ENCODE measurements at regions of chr3 and their contacts with region 1.

Region 1: DNA sequence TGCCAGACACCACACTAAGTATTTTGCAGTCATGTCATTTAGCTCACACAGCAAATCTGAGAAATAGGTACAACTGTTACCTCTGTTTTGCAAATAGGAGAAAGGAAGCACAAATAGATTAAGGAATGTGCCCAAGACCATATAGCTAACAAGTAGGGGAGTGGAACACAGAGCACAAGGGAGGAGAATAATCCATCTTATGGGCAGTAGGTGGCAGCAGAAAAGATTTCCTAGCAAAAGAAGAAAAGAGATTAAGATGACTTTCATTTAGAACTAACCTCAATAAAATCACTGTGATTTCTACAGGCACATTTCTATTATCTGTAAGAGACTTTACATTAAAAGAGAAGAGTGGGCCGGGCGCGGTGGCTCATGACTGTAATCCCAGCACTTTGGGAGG is 49.1 kb downstream of the NR1I2 start:
- DNase-seq: no peak
- ATAC-seq: no peak
- H3K4me3 ChIP-seq: no peak overlapping the region
- H3K27ac ChIP-seq: no peak overlapping the region
- H3K4me1 ChIP-seq: no peaks in the 10 kb centered on the region
- H3K27me3 ChIP-seq: no peaks in the 10 kb centered on the region
- CTCF ChIP-seq: peak; percentile 56; the same call in 1 of the 2 replicates

Region 2: DNA sequence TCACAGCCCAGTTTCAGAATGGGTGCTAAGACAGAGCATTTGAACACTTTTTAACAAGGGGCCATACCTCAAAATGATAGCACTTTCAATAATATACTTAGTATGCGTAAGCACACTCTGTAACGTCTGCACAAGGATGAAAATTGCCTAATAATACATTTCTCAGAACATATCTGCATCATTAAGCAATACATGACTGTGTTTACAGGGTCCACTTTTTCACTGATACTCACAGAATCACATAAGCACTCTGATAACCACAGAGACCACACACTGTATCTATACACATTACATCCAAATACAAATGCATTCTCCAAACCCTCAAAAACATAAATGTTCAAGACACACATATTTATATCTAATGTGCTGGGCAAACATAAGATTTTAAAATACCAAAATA is 30.7 kb after region 1 on chr3:
- CTCF ChIA-PET with region 1: interaction called, 11 read pairs
- POLR2A ChIA-PET with region 1: no interaction called
- in situ Hi-C with region 1: no loop called
- intact Hi-C with region 1: no loop called
- DNase-seq: no peak
- ATAC-seq: no peak
- H3K4me3 ChIP-seq: no peak overlapping the region
- H3K27ac ChIP-seq: no peak overlapping the region
- H3K4me1 ChIP-seq: no peaks in the 10 kb centered on the region
- H3K27me3 ChIP-seq: no peaks in the 10 kb centered on the region
- CTCF ChIP-seq: no peak